K562 (cell line): ENCODE measurements at regions of chr3 and their contacts with region 1.

Region 1: GRCh38 chr3:152834776-152835600 is at the start of gene P2RY1:
- DNase-seq: peak; percentile 83 to 89 (median 86)
- ATAC-seq: peak; percentile 85
- H3K4me3 ChIP-seq: peak within 1 kb of the TSS; percentile 68
- H3K27ac ChIP-seq: peak within 1 kb of the TSS; percentile 89
- H3K4me1 ChIP-seq: peaks cover 8 to 15% of the 10 kb centered on the region in 2 experiments; a peak in 4 of 5 replicates
- H3K27me3 ChIP-seq: no peaks in the 10 kb centered on the region
- CTCF ChIP-seq: peak; percentile 56 to 79 (median 58)
- EP300 ChIP-seq: no peak
- POLR2A ChIP-seq: peak; percentile 94
- RAD21 ChIP-seq: peak; percentile 39 to 55; a peak in 3 of 4 replicates
- polyA plus RNA-seq, gene P2RY1: 6.0 TPM

Region 2: DNA sequence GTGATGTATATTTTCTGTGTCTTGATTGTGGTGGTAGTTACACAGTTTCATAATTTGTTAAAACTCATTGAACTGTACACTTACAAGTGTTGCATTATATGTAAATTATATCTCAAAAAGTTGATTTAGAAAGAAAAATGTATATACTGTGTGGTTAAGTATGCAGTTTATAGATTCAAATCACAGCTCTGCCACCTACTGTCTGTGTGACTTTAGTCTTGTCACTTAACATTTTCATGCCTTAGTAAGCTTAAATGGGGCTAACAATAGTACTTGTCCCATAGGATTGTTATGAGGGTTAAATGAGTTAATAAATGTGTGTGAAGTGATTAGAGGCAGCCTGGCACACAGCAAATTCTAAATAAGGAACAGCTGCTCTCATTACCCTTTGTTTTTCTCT is 121.0 kb before region 1 on chr3:
- CTCF ChIA-PET with region 1: no interaction called
- POLR2A ChIA-PET with region 1: no interaction called
- in situ Hi-C with region 1: no loop called
- intact Hi-C with region 1: loop called (anchors 5 kb)
- DNase-seq: no peak
- ATAC-seq: peak; percentile 55; the same call in 1 of the 3 replicates
- H3K4me3 ChIP-seq: no peak overlapping the region
- H3K27ac ChIP-seq: no peak overlapping the region
- H3K4me1 ChIP-seq: peaks cover 0 to under 1% of the 10 kb centered on the region in 2 experiments; a peak in 1 of 5 replicates
- H3K27me3 ChIP-seq: no peaks in the 10 kb centered on the region
- CTCF ChIP-seq: peak in 1 of 3 experiments; percentile 33; a peak in 1 of 6 replicates
- EP300 ChIP-seq: no peak
- POLR2A ChIP-seq: no peak
- RAD21 ChIP-seq: peak in 1 of 2 experiments; percentile 69; a peak in 2 of 4 replicates

Region 3: GRCh38 chr3:152885076-152885475 is 50.1 kb after region 1 on chr3:
- CTCF ChIA-PET with region 1: no interaction called
- POLR2A ChIA-PET with region 1: no interaction called
- in situ Hi-C with region 1: no loop called
- intact Hi-C with region 1: no loop called
- DNase-seq: no peak
- ATAC-seq: peak; percentile 41; the same call in 2 of the 3 replicates
- H3K4me3 ChIP-seq: no peak overlapping the region
- H3K27ac ChIP-seq: no peak overlapping the region
- H3K4me1 ChIP-seq: no peaks in the 10 kb centered on the region
- H3K27me3 ChIP-seq: no peaks in the 10 kb centered on the region
- CTCF ChIP-seq: no peak
- EP300 ChIP-seq: no peak
- POLR2A ChIP-seq: no peak
- RAD21 ChIP-seq: no peak

Region 4: DNA sequence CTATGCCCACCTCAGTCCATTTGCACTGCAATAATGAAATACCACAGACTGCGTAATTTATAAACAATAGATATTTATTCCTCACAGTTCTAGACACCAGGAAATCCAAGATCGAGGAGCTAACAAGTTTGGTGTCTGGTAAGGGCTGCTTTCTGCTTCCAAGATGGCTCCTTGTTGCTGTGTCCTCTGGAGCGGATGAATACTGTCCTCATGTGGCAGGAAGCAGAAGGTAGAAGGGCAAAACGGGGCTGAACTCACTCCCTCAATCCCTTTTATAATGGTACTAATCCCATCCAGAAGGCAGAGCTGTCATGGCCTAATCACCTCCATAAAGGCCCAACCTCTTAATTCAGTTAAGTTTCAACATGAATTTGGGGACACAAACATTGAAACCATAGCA is 75.2 kb after region 1 on chr3:
- CTCF ChIA-PET with region 1: no interaction called
- POLR2A ChIA-PET with region 1: interaction called, 6 read pairs
- in situ Hi-C with region 1: no loop called
- intact Hi-C with region 1: loop called (anchors 5 kb)
- DNase-seq: peak in 1 of 4 experiments; percentile 55
- ATAC-seq: peak; percentile 91
- H3K4me3 ChIP-seq: no peak overlapping the region
- H3K27ac ChIP-seq: peak overlapping the region; percentile 15; the same call in 1 of the 3 replicates
- H3K4me1 ChIP-seq: peaks cover 0 to 5% of the 10 kb centered on the region in 2 experiments; a peak in 1 of 5 replicates
- H3K27me3 ChIP-seq: no peaks in the 10 kb centered on the region
- CTCF ChIP-seq: peak; percentile 55 to 63 (median 56)
- EP300 ChIP-seq: no peak
- POLR2A ChIP-seq: no peak
- RAD21 ChIP-seq: peak; percentile 51 to 89

Region 5: DNA sequence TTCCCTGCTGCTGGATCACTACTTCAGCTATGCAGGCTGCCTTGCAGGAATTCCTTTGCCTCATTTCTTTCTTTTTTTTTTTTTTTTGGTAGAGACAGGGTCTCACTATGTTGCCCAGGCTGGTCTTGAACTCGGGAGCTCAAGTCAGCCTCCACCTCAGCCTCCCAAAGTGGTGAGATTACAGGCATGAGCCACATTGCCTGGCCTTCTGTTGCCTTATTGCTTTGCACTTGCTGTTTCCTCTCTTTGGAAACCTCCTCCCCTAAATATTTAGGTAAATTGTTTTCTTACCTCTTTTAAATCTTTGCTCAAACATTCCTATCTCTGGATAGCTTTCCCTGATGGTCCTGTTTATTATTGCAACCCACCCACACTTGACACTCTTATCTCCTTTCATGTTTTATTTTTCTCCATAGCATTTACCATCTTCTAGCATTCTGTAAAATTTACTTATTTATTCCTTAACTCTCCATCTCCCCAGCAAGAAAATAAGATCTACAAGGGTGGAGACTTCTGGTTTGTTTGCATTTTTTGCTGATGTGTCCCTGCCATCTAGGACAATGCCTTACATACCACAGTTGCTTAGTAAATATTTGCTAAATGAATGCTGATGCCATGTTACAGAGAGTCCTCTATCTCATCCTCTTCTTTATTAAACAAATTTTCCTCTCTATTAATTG is 134.7 kb after region 1 on chr3:
- CTCF ChIA-PET with region 1: no interaction called
- POLR2A ChIA-PET with region 1: no interaction called
- in situ Hi-C with region 1: no loop called
- intact Hi-C with region 1: loop called (anchors 5 kb)
- DNase-seq: no peak
- ATAC-seq: no peak
- H3K4me3 ChIP-seq: no peak overlapping the region
- H3K27ac ChIP-seq: no peak overlapping the region
- H3K4me1 ChIP-seq: peaks cover 2 to 26% of the 10 kb centered on the region in 2 experiments; a peak in 3 of 5 replicates
- H3K27me3 ChIP-seq: no peaks in the 10 kb centered on the region
- CTCF ChIP-seq: no peak
- EP300 ChIP-seq: no peak
- POLR2A ChIP-seq: no peak
- RAD21 ChIP-seq: no peak